Upper lobe of right lung (tissue), 1 donor: ENCODE measurements at regions of chr1 and their contacts with region 1.

Region 1: DNA sequence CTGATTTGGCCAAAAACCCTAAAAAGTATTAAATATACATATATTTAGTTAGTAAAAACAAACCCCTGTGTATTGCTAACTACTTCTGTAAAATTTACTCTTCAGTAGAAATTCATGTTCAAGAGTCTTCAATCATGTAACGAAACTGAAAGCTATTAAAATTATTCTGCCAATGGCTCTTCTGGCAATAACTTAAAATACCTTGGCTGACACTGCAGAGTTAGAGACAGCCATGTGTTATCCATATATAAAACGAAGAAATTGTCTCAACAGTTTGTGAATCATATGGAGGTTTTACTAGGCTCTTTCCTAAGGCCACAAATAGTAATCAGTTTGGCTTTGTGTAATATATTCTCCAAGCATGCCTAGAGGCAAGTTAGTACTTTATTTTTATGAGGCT is 357.2 kb downstream of the COL11A1 start:
- DNase-seq: no peak
- ATAC-seq: no peak
- H3K4me3 ChIP-seq: no peak overlapping the region
- H3K27ac ChIP-seq: no peak overlapping the region
- H3K4me1 ChIP-seq: no peaks in the 10 kb centered on the region
- H3K27me3 ChIP-seq: no peaks in the 10 kb centered on the region
- CTCF ChIP-seq: no peak

Region 2: GRCh38 chr1:102615896-102616295 is 135.2 kb before region 1 on chr1:
- intact Hi-C with region 1: loop called (anchors 5 kb)
- DNase-seq: no peak
- ATAC-seq: no peak
- H3K4me3 ChIP-seq: no peak overlapping the region
- H3K27ac ChIP-seq: no peak overlapping the region
- H3K4me1 ChIP-seq: no peaks in the 10 kb centered on the region
- H3K27me3 ChIP-seq: no peaks in the 10 kb centered on the region
- CTCF ChIP-seq: no peak